CD14-positive monocyte (primary cell): ENCODE measurements at regions of chr19 and their contacts with region 1.

Region 1: GRCh38 chr19:41439441-41440222 is at the start of gene DMAC2:
- DNase-seq: peak; percentile 91 to 96 (median 93)
- H3K4me3 ChIP-seq: peak within 1 kb of the TSS; percentile 62 to 92 (median 91)
- H3K4me3 Mint-ChIP-seq: peak within 1 kb of the TSS in 1 of 2 donors; percentile 66
- H3K27ac ChIP-seq: peak within 1 kb of the TSS; percentile 92 to 94
- H3K27ac Mint-ChIP-seq: peak within 1 kb of the TSS in 2 of 7 donors; percentile 31 to 52
- H3K4me1 ChIP-seq: peaks cover 27% of the 10 kb centered on the region in 2 donors
- H3K4me1 Mint-ChIP-seq: peaks cover 39% of the 10 kb centered on the region
- H3K27me3 ChIP-seq: no peaks in the 10 kb centered on the region
- H3K27me3 Mint-ChIP-seq: peaks cover 1 to 5% (median 3%) of the 10 kb centered on the region in 3 donors
- CTCF ChIP-seq: peak; percentile 36
- polyA plus RNA-seq, gene DMAC2: 33.2 to 48.0 (median 43.8) TPM

Region 2: DNA sequence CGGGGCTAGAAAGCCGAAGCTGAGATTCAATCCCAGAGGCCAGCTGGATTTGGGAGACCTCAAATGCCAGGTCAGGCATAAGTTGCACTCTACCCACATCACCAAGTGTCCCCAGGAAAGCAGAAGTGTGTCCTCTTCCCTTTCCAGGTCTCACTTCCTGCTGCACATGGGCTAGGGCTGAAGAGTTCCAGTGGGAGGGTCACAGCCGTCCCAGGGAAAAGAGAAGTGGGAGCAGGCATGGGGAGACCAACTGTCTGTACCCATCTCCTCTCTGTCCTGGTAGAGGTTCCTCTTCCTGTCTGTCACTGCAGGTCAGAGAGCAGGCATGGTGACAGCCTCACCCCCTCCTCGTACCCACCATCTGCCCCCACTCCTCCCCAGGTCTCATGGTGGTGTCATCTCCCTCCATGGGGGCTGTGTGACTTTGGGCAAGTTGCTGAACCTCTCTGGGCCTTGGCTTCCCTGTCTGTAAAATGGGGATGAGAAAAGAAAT is 205.8 kb before region 1 on chr19:
- intact Hi-C with region 1: no loop called
- DNase-seq: peak; percentile 72 to 83 (median 81)
- H3K4me3 ChIP-seq: peak overlapping the region in 1 of 3 experiments; percentile 40
- H3K4me3 Mint-ChIP-seq: peak overlapping the region in 1 of 2 donors; percentile 67
- H3K27ac ChIP-seq: peak overlapping the region; percentile 33 to 70
- H3K27ac Mint-ChIP-seq: peak overlapping the region; percentile 55 to 90 (median 77)
- H3K4me1 ChIP-seq: peaks cover 24 to 25% of the 10 kb centered on the region in 2 donors
- H3K4me1 Mint-ChIP-seq: peaks cover 20% of the 10 kb centered on the region
- H3K27me3 ChIP-seq: no peaks in the 10 kb centered on the region
- H3K27me3 Mint-ChIP-seq: peaks cover 0 to 1% (median under 1%) of the 10 kb centered on the region in 3 donors
- CTCF ChIP-seq: no peak

Region 3: GRCh38 chr19:41353466-41354342 is 85.9 kb before region 1 on chr19 and contains the start of gene TGFB1:
- intact Hi-C with region 1: loop called in 1 of 2 experiments (anchors 5 kb)
- DNase-seq: peak; percentile 88 to 94 (median 94)
- H3K4me3 ChIP-seq: peak within 1 kb of the TSS; percentile 89 to 97 (median 95)
- H3K4me3 Mint-ChIP-seq: peak within 1 kb of the TSS; percentile 94 to 100
- H3K27ac ChIP-seq: peak within 1 kb of the TSS; percentile 56 to 88
- H3K27ac Mint-ChIP-seq: peak within 1 kb of the TSS; percentile 91 to 98 (median 96)
- H3K4me1 ChIP-seq: peaks cover 70 to 73% of the 10 kb centered on the region in 2 donors
- H3K4me1 Mint-ChIP-seq: peaks cover 71% of the 10 kb centered on the region
- H3K27me3 ChIP-seq: no peaks in the 10 kb centered on the region
- H3K27me3 Mint-ChIP-seq: peaks cover 0 to 1% (median 0%) of the 10 kb centered on the region in 3 donors
- CTCF ChIP-seq: peak; percentile 93
- polyA plus RNA-seq, gene TGFB1: 30.6 to 138 (median 42.2) TPM

Region 4: DNA sequence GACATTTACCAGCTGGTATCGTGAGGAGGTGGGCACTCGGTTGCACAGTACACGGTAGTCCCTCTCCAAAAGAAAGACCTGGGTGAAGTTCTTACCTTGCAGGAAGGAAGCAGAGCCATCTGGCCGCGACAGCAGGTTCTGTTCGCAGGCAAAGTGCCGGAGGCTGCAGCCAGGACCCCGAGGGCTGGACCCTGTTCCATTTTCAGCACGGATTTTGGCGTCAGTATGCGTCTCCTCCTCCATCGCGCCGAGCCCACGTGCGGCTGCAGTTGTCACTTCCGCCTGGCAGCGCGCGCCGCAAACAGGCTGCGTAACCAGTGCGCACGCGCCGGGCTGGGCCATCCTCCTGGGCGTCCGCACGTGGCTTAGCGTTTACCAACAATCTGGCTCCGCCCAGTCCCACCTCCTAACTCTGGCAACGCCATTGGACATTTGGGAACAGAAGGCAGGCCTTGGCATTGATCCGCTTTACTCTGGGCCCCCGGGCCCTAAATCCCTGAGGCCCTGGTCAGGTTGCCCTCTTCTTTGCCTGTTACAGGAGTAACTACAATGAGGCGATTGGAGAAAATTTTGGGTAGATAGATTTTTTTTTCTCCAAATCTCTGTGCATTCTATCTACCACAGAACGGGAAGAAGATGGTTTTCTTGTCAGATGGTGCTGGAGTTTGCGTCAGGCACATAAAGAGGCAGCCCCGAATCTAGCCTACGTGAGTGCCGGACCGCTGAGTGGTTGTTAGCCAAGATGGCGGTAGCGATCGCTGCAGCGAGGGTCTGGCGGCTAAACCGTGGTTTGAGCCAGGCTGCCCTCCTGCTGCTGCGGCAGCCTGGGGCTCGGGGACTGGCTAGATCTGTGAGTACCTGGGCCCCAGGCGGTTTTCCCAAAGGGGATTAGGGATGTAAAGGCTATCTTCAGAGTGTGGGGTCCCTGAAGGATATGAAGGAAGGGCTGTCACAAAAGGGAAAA is 42.3 kb before region 1 on chr19 and contains the starts of genes BCKDHA and EXOSC5:
- intact Hi-C with region 1: loop called (anchors 1 to 5 kb)
- DNase-seq: peak; percentile 100
- H3K4me3 ChIP-seq: peak within 1 kb of the TSS; percentile 87 to 95 (median 95)
- H3K4me3 Mint-ChIP-seq: peak within 1 kb of the TSS; percentile 97
- H3K27ac ChIP-seq: peak within 1 kb of the TSS; percentile 80 to 97
- H3K27ac Mint-ChIP-seq: peak within 1 kb of the TSS; percentile 98 to 100 (median 99)
- H3K4me1 ChIP-seq: peaks cover 29 to 30% of the 10 kb centered on the region in 2 donors
- H3K4me1 Mint-ChIP-seq: peaks cover 42% of the 10 kb centered on the region
- H3K27me3 ChIP-seq: no peaks in the 10 kb centered on the region
- H3K27me3 Mint-ChIP-seq: no peaks in the 10 kb centered on the region
- CTCF ChIP-seq: no peak
- polyA plus RNA-seq, gene BCKDHA: 52.4 to 90.1 (median 87.6) TPM
- polyA plus RNA-seq, gene EXOSC5: 24.0 to 58.7 (median 40.5) TPM

Region 5: DNA sequence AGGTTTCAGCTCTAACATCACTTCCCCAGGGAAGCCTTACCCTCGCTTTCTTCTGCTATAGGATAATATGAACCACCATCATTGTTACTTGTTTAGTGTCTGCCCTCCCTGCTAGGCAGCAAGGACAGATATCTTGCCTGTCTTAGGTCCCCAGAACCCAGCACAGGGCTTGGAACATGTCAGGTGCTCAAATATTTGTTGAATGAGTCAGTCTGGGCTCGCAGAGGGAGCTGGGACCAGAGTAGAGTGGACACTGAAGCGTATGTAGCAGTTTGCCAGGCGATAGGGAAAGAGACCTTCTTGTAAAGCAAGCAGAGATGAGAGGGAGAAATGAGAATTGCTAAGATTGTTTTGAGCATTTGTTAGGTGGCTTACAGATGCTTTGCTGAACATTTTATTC is 30.3 kb before region 1 on chr19:
- intact Hi-C with region 1: no loop called
- DNase-seq: peak; percentile 65 to 83 (median 75)
- H3K4me3 ChIP-seq: peak overlapping the region in 1 of 3 experiments; percentile 27
- H3K4me3 Mint-ChIP-seq: peak overlapping the region; percentile 54 to 61
- H3K27ac ChIP-seq: peak overlapping the region; percentile 93 to 94
- H3K27ac Mint-ChIP-seq: peak overlapping the region; percentile 96 to 100 (median 99)
- H3K4me1 ChIP-seq: peaks cover 69 to 85% of the 10 kb centered on the region in 2 donors
- H3K4me1 Mint-ChIP-seq: peaks cover 78% of the 10 kb centered on the region
- H3K27me3 ChIP-seq: no peaks in the 10 kb centered on the region
- H3K27me3 Mint-ChIP-seq: peaks cover 0 to 2% (median 0%) of the 10 kb centered on the region in 3 donors
- CTCF ChIP-seq: no peak

Region 6: DNA sequence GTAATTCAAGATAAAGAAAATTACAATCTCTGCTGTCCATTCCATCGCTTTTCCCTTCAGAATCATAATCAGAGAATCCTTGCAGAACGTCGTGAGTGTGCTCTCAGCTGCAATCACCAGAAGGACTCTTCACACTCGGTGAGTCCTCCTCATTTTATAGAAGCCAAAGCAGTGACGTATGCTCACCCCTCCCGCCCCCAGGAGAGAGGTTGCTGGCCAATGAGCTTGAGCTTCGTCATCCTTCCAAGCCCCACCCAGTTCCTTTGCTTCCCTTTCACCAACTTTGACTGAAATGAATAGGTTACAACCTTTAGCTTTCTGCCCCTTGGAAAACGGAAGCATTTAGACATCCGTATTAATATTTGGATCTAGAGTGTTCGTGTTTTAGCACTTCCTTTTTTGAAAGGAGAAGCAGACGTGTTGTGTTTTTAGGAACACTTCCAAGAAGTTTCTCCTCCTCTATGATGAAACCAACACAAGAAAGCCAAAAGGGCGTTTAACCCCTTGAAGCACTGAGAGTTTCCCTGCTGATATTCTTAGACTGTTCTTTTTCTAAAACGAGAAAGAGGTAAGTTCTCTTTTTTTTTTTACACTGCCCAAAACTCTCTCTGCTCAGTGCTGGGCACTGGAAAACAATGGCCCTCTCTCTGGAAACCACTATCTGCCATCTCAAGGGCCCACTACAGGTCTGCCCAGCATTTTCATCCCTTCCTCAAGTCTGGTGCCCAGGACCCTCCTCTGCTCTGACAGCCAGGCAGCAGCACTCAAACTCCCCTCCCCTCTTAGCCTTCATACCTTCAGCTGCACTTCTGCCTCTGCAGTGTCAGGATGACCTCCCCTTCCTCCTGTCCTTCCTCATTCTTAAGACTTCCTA is 92.0 kb after region 1 on chr19:
- intact Hi-C with region 1: loop called in 1 of 2 experiments (anchors 10 kb)
- DNase-seq: peak; percentile 97 to 99 (median 98)
- H3K4me3 ChIP-seq: peak overlapping the region in 2 of 3 experiments; percentile 43 to 64
- H3K4me3 Mint-ChIP-seq: peak overlapping the region; percentile 54 to 86
- H3K27ac ChIP-seq: peak overlapping the region; percentile 69 to 92
- H3K27ac Mint-ChIP-seq: peak overlapping the region; percentile 97 to 99 (median 99)
- H3K4me1 ChIP-seq: peaks cover 64 to 79% of the 10 kb centered on the region in 2 donors
- H3K4me1 Mint-ChIP-seq: peaks cover 66% of the 10 kb centered on the region
- H3K27me3 ChIP-seq: no peaks in the 10 kb centered on the region
- H3K27me3 Mint-ChIP-seq: peaks cover 0 to 6% (median 4%) of the 10 kb centered on the region in 3 donors
- CTCF ChIP-seq: no peak